Mammary epithelial cell (primary cell): ENCODE measurements at regions of chr2 and their contacts with region 1.

Region 1: GRCh38 chr2:1742681-1743395 is 1.5 kb downstream of the PXDN start:
- DNase-seq: peak; percentile 90
- H3K4me3 ChIP-seq: peak overlapping the region; percentile 64 to 72 (median 71)
- H3K27ac ChIP-seq: peak overlapping the region; percentile 81
- H3K4me1 ChIP-seq: peaks cover 16% of the 10 kb centered on the region
- H3K27me3 ChIP-seq: no peaks in the 10 kb centered on the region
- CTCF ChIP-seq: peak; percentile 52 to 75

Region 2: DNA sequence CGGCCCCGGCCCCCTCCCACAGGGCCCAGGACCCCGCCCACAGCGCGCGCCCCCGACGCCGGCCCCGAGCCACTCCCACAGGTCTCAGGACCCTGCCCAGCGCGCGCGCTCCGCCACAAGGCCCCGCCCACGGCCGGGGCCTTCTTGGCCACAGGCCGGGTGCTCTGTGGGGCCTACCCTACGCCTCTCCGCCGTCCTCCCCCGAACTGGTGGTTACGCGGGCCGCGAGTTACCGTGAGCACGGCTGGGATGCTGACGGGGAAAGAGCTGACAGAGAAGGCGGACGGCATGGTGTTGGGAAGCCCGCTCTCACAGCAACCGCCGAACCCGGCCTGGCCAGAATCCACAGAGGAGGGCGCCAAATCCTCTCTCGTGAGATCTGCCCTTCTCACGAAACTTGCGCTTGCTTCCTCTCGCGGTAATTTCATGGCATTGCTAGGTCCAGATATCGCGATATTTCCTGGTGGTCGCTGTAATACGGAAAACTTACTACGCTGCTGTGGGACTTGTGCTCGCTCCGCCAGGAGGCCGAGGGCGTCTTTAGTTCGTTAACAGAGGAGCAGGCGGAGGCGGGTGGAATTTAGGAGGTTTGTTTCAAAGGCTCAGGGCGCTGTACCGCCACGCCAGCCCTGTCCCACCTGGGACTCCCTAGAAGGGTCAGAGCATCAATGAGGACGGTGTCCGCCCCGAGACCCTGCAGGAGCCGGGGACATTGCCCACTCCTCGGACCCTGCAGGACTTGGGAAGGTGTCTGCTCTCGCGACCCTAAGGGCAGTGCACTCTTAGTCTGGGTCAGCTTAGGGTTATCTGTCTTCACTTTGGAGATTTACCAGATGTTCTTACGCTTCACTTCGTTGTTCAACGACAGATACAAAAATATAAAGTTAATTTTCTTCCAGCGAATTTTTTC is 1065.5 kb before region 1 on chr2 and contains the start of gene TMEM18:
- CTCF ChIA-PET with region 1: no interaction called
- dilution Hi-C with region 1: no loop called
- in situ Hi-C with region 1: no loop called
- intact Hi-C with region 1: loop called (anchors 5 kb)
- DNase-seq: peak; percentile 97
- H3K4me3 ChIP-seq: peak within 1 kb of the TSS; percentile 68 to 96 (median 95)
- H3K27ac ChIP-seq: peak within 1 kb of the TSS; percentile 92
- H3K4me1 ChIP-seq: peaks cover 25% of the 10 kb centered on the region
- H3K27me3 ChIP-seq: no peaks in the 10 kb centered on the region
- CTCF ChIP-seq: peak; percentile 6 to 39
- total RNA-seq, gene TMEM18: 9.2 to 19.5 TPM

Region 3: GRCh38 chr2:1625208-1625937 is 117.5 kb before region 1 on chr2:
- CTCF ChIA-PET with region 1: no interaction called
- dilution Hi-C with region 1: no loop called
- in situ Hi-C with region 1: no loop called
- intact Hi-C with region 1: loop called (anchors 1 kb)
- DNase-seq: peak; percentile 100
- H3K4me3 ChIP-seq: no peak overlapping the region
- H3K27ac ChIP-seq: peak overlapping the region; percentile 74
- H3K4me1 ChIP-seq: peaks cover 26% of the 10 kb centered on the region
- H3K27me3 ChIP-seq: no peaks in the 10 kb centered on the region
- CTCF ChIP-seq: no peak

Region 4: GRCh38 chr2:1675633-1676032 is 67.2 kb before region 1 on chr2:
- CTCF ChIA-PET with region 1: interaction called, 4 read pairs
- dilution Hi-C with region 1: no loop called
- in situ Hi-C with region 1: no loop called
- intact Hi-C with region 1: loop called (anchors 1 kb)
- DNase-seq: peak; percentile 99
- H3K4me3 ChIP-seq: no peak overlapping the region
- H3K27ac ChIP-seq: peak overlapping the region; percentile 84
- H3K4me1 ChIP-seq: peaks cover 20% of the 10 kb centered on the region
- H3K27me3 ChIP-seq: no peaks in the 10 kb centered on the region
- CTCF ChIP-seq: peak; percentile 62 to 83

Region 5: GRCh38 chr2:1717113-1717512 is 25.7 kb before region 1 on chr2:
- CTCF ChIA-PET with region 1: no interaction called
- dilution Hi-C with region 1: no loop called
- in situ Hi-C with region 1: no loop called
- intact Hi-C with region 1: loop called (anchors 2 kb)
- DNase-seq: peak; percentile 99
- H3K4me3 ChIP-seq: no peak overlapping the region
- H3K27ac ChIP-seq: peak overlapping the region; percentile 96
- H3K4me1 ChIP-seq: peaks cover 37% of the 10 kb centered on the region
- H3K27me3 ChIP-seq: no peaks in the 10 kb centered on the region
- CTCF ChIP-seq: no peak

Region 6: GRCh38 chr2:1808981-1809422 is 66.2 kb after region 1 on chr2:
- CTCF ChIA-PET with region 1: no interaction called
- dilution Hi-C with region 1: no loop called
- in situ Hi-C with region 1: no loop called
- intact Hi-C with region 1: no loop called
- DNase-seq: no peak
- H3K4me3 ChIP-seq: no peak overlapping the region
- H3K27ac ChIP-seq: no peak overlapping the region
- H3K4me1 ChIP-seq: no peaks in the 10 kb centered on the region
- H3K27me3 ChIP-seq: no peaks in the 10 kb centered on the region
- CTCF ChIP-seq: no peak